ENCODE measurements at regions of chr6 and their contacts with region 1.

Region 1: GRCh38 chr6:99402448-99402847 is 8.5 kb upstream of the COQ3 start:
- DNase-seq: no peak
- ATAC-seq: no peak
- H3K4me3 ChIP-seq: no peak overlapping the region
- H3K27ac ChIP-seq: no peak overlapping the region
- H3K4me1 ChIP-seq: peaks cover 0 to 3% (median 0%) of the 10 kb centered on the region in 9 donors
- H3K27me3 ChIP-seq: no peaks in the 10 kb centered on the region
- CTCF ChIP-seq: no peak

Region 2: DNA sequence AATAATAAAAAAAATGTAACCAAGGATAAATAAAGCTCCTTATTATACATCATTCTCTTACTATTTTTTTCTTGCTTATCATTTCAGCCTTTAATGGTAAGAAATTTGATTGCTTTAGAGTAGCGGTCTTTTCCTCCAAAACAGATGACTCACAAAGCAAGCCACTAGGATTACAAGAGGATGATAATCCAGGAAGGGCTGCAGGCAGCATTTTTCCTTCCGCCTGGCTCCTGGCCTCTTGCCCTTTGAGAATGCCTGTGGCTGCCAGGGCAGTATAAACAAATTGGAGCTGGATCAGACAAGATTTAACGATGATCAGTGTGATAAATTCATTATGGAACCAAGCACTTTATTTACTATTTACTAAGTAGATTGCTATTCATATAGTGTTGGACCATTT is 445.0 kb before region 1 on chr6:
- intact Hi-C with region 1: no loop called
- DNase-seq: no peak
- ATAC-seq: no peak
- H3K4me3 ChIP-seq: no peak overlapping the region
- H3K27ac ChIP-seq: no peak overlapping the region
- H3K4me1 ChIP-seq: no peaks in the 10 kb centered on the region
- H3K27me3 ChIP-seq: no peaks in the 10 kb centered on the region
- CTCF ChIP-seq: no peak

Region 3: GRCh38 chr6:99121748-99122147 is 280.7 kb before region 1 on chr6:
- intact Hi-C with region 1: no loop called
- DNase-seq: no peak
- ATAC-seq: no peak
- H3K4me3 ChIP-seq: no peak overlapping the region
- H3K27ac ChIP-seq: no peak overlapping the region
- H3K4me1 ChIP-seq: no peaks in the 10 kb centered on the region
- H3K27me3 ChIP-seq: peaks cover 0 to 37% (median 19%) of the 10 kb centered on the region in 7 donors
- CTCF ChIP-seq: no peak

Region 4: GRCh38 chr6:99520855-99521632 is 118.6 kb after region 1 on chr6:
- intact Hi-C with region 1: loop called in 1 of 10 experiments (anchors 10 kb)
- DNase-seq: peak; percentile 82 to 84
- ATAC-seq: peak; percentile 96 to 99 (median 98)
- H3K4me3 ChIP-seq: peak overlapping the region; percentile 60 to 96 (median 74)
- H3K27ac ChIP-seq: peak overlapping the region; percentile 55 to 94 (median 89)
- H3K4me1 ChIP-seq: peaks cover 0 to 18% (median 8%) of the 10 kb centered on the region in 9 donors
- H3K27me3 ChIP-seq: no peaks in the 10 kb centered on the region
- CTCF ChIP-seq: peak; percentile 72 to 93 (median 87)

Region 5: DNA sequence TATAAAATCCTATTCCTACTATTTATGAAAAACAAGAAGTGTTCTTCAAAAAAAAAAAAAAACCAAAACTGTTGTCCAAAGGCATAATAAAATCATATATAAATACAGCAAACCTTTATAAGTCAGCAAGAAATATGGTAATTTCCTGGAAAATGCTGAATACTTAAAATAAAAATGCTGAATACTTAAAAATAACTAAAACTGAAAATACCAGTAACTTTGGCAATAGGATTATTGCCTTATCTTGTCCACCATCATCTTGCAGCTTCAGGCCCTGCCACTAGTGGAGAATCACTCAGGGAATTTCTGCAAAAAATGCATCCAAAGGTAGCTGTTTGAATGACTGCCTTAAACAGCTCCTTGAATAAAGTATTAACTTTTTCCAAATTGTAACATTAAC is 141.5 kb after region 1 on chr6:
- intact Hi-C with region 1: loop called in 1 of 10 experiments (anchors 10 kb)
- DNase-seq: no peak
- ATAC-seq: no peak
- H3K4me3 ChIP-seq: no peak overlapping the region
- H3K27ac ChIP-seq: no peak overlapping the region
- H3K4me1 ChIP-seq: no peaks in the 10 kb centered on the region
- H3K27me3 ChIP-seq: no peaks in the 10 kb centered on the region
- CTCF ChIP-seq: no peak